WTC11 (cell line): ENCODE measurements at regions of chr6 and their contacts with region 1.

Region 1: GRCh38 chr6:157235600-157236039 is 87.7 kb downstream of the TMEM242 start:
- DNase-seq: peak; percentile 80
- ATAC-seq: peak; percentile 88
- H3K4me3 Mint-ChIP-seq: peak overlapping the region; percentile 97
- H3K27ac Mint-ChIP-seq: no peak overlapping the region; the same call in 1 of the 2 replicates
- H3K4me1 Mint-ChIP-seq: peaks cover 27% of the 10 kb centered on the region
- H3K27me3 Mint-ChIP-seq: peaks cover 47% of the 10 kb centered on the region
- CTCF ChIP-seq: peak; percentile 62

Region 2: GRCh38 chr6:157219201-157220200 is 16.1 kb before region 1 on chr6:
- CTCF ChIA-PET with region 1: interaction called, 16 read pairs
- POLR2A ChIA-PET with region 1: no interaction called
- DNase-seq: no peak
- ATAC-seq: peak; percentile 52
- H3K4me3 Mint-ChIP-seq: no peak overlapping the region
- H3K27ac Mint-ChIP-seq: no peak overlapping the region
- H3K4me1 Mint-ChIP-seq: peaks cover 18% of the 10 kb centered on the region
- H3K27me3 Mint-ChIP-seq: peaks cover 16% of the 10 kb centered on the region
- CTCF ChIP-seq: no peak

Region 3: DNA sequence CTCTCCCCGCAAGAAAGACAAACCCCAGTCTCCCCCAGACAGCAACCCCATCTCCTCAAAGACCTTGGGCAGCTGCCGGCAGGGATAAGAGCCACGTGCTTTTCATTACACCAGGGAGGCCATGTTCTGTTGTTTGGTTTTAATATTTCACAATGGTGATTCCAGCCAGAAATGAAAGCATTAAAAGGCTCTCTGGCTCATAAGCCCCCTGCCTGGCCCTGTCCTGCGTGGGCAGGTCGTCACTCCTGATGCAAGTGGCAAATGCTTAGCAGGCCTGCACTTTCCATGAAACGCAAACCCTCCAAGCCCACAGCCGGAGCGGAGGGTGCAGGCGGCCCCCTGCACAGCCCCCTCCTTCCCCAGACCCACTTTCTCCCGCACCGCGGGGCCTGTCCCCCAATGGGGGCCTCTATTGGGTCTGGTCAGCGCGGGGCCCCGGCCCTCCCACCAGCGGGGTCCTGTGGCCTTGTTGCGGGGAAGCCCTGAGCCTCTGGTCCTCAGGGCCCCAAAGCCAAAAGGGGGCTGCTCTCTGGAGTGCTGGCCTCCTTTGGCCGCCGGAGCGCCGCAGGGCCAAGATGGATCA is 10.5 kb after region 1 on chr6:
- CTCF ChIA-PET with region 1: interaction called, 18 read pairs
- POLR2A ChIA-PET with region 1: no interaction called
- DNase-seq: no peak
- ATAC-seq: no peak; the same call in 1 of the 2 replicates
- H3K4me3 Mint-ChIP-seq: no peak overlapping the region
- H3K27ac Mint-ChIP-seq: no peak overlapping the region
- H3K4me1 Mint-ChIP-seq: no peaks in the 10 kb centered on the region
- H3K27me3 Mint-ChIP-seq: no peaks in the 10 kb centered on the region; the same call in 1 of the 2 replicates
- CTCF ChIP-seq: no peak

Region 4: DNA sequence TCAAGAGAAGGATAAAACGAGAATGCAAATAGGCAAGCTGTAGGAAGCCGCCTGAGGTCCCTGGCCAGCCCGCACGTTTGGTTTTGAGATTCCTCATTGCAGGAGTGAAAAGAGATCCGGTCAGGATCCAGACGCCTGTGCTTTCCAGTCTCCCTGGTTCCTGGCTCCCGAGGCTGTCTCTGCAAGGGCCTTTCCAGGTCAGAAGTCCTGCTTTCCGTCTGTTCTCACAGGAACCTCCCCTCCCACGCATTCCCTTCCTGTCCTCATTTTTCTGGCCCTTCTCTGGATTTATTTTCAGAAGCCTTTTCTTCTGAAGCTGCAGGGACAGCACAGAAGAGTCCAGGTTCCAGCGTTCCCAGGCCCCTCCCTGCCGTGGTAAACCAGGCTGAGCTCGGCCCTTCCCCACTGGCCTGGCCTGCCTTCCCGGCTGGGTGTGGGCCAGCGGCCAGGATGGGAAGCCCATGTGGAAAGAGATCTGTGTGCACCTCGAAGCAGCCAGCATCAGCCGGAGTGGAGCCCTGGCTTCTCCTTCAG is 33.7 kb after region 1 on chr6:
- CTCF ChIA-PET with region 1: interaction called, 20 read pairs
- POLR2A ChIA-PET with region 1: no interaction called
- DNase-seq: no peak
- ATAC-seq: no peak
- H3K4me3 Mint-ChIP-seq: no peak overlapping the region
- H3K27ac Mint-ChIP-seq: no peak overlapping the region
- H3K4me1 Mint-ChIP-seq: peaks cover 17% of the 10 kb centered on the region
- H3K27me3 Mint-ChIP-seq: peaks cover 11% of the 10 kb centered on the region
- CTCF ChIP-seq: no peak

Region 5: GRCh38 chr6:157274471-157275226 is 39.0 kb after region 1 on chr6:
- CTCF ChIA-PET with region 1: interaction called, 20 read pairs
- POLR2A ChIA-PET with region 1: interaction called, 5 read pairs
- DNase-seq: peak; percentile 78
- ATAC-seq: peak; percentile 87
- H3K4me3 Mint-ChIP-seq: peak overlapping the region; percentile 77
- H3K27ac Mint-ChIP-seq: no peak overlapping the region
- H3K4me1 Mint-ChIP-seq: peaks cover 23% of the 10 kb centered on the region
- H3K27me3 Mint-ChIP-seq: peaks cover 24% of the 10 kb centered on the region
- CTCF ChIP-seq: peak; percentile 72

Region 6: DNA sequence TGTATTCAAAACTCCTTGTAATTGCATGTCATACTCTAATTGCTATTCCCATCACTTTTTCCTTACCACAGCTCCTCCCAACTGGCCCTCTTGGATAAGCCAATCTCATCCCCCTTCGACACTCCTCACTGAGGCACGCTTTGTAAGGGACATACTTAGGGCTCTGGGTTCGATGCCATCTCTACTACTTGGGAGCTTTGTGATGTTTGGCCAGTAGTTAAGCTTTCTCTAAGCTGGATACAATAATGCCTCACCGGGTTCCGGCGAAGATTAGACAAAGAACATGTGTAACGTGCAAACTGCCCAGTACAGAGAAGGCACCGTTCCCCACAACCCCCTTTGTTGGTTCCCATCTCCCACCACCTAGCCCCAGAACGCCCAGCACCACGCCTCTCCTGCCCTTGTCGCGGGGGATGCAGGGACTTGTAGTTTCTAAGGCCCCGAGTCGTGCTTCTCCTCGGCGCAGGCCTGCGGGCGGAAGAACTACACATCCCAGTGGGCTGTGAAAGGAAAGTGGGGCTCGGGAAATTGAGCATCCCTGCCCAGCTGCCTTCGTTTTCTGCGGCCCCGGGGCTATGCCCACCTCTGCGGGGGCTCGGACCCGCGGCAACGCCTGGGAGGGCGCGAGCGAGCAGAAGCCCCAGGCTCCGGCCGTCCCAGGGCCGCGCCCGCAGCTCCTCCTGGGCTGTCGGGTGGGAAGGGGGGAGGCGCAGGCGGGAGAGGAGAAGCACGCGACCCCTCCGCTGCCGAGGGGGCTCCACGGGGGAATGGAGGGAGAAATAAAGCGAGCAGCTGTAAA is 144.2 kb after region 1 on chr6:
- CTCF ChIA-PET with region 1: no interaction called
- POLR2A ChIA-PET with region 1: no interaction called
- DNase-seq: peak; percentile 95
- ATAC-seq: peak; percentile 92
- H3K4me3 Mint-ChIP-seq: peak overlapping the region; percentile 66
- H3K27ac Mint-ChIP-seq: no peak overlapping the region
- H3K4me1 Mint-ChIP-seq: peaks cover 28% of the 10 kb centered on the region
- H3K27me3 Mint-ChIP-seq: peaks cover 32% of the 10 kb centered on the region
- CTCF ChIP-seq: no peak